Mammary epithelial cell (primary cell): ENCODE measurements at regions of chr5 and their contacts with region 1.

Region 1: GRCh38 chr5:71830681-71831539 is 111.8 kb downstream of the CARTPT start:
- DNase-seq: peak; percentile 57
- H3K4me3 ChIP-seq: no peak overlapping the region
- H3K27ac ChIP-seq: no peak overlapping the region
- H3K4me1 ChIP-seq: no peaks in the 10 kb centered on the region
- H3K27me3 ChIP-seq: no peaks in the 10 kb centered on the region
- CTCF ChIP-seq: no peak

Region 2: DNA sequence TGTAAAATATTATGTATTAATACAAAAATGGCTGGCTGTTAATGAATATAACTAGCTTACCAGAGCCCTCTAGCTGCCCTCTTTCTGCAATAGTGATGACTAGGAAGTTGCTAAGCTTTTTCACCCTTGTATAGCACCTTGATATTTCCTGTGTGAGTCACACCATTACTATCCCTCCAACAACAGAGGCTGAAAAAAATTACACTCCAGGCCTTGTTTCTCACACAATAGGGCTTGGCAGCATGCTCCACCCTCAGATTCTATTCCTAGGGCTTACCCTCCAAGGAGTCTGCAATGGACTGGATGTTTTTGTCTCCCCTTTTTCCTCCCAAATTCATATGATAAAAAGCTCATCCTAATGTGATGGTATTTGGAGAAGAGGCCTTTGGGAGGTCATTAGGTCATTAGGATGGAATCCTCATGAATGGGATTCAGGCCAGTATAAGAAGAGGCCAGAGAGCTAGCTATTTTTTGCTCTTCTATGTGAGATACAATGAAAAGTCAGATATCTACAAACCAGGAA is 91.7 kb after region 1 on chr5:
- CTCF ChIA-PET with region 1: no interaction called
- dilution Hi-C with region 1: no loop called
- in situ Hi-C with region 1: no loop called
- intact Hi-C with region 1: loop called (anchors 5 kb)
- DNase-seq: peak; percentile 92
- H3K4me3 ChIP-seq: no peak overlapping the region
- H3K27ac ChIP-seq: peak overlapping the region; percentile 68
- H3K4me1 ChIP-seq: peaks cover 22% of the 10 kb centered on the region
- H3K27me3 ChIP-seq: no peaks in the 10 kb centered on the region
- CTCF ChIP-seq: peak; percentile 8 to 39